ENCODE measurements at regions of chr4 and their contacts with region 1.

Region 1: GRCh38 chr4:48546336-48546735 is 56.3 kb downstream of the ZAR1 start:
- DNase-seq: peak; percentile 73
- H3K4me3 ChIP-seq: no peak overlapping the region
- H3K27ac ChIP-seq: no peak overlapping the region
- H3K4me1 ChIP-seq: peaks cover 32% of the 10 kb centered on the region
- H3K27me3 ChIP-seq: no peaks in the 10 kb centered on the region
- CTCF ChIP-seq: peak; percentile 82

Region 2: DNA sequence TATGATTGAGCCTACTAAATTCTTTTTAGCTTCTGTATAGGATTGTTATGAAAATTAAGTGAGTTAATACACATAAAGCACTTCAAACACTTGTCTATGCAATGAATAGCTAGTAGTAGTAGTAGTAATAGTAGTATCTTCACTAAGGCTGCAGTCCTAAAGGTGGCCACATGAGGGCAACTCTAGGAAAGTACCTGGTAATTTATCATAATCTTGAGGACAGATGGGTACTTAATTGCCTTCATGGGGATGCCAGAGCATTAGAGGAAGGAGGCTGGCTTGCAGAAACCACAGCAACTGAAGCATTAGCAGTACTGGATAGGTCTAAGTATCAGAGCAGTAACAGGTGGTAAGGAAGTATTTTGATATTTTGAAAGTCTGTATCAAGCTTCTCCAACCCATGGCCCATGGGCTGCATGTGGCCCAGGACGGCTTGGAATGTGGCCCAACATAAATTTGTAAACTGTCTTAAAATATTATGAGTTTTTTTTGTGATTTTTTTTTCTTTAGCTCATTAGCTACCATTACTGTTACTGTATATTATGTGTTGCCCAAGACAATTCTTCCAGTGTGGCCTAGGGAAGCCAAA is 512.4 kb before region 1 on chr4:
- CTCF ChIA-PET with region 1: no interaction called
- POLR2A ChIA-PET with region 1: no interaction called
- intact Hi-C with region 1: loop called (anchors 10 kb)
- DNase-seq: peak; percentile 64
- H3K4me3 ChIP-seq: no peak overlapping the region
- H3K27ac ChIP-seq: no peak overlapping the region
- H3K4me1 ChIP-seq: no peaks in the 10 kb centered on the region
- H3K27me3 ChIP-seq: no peaks in the 10 kb centered on the region
- CTCF ChIP-seq: peak; percentile 69

Region 3: GRCh38 chr4:48127682-48128394 is 418.5 kb before region 1 on chr4:
- CTCF ChIA-PET with region 1: interaction called, 13 read pairs
- POLR2A ChIA-PET with region 1: no interaction called
- intact Hi-C with region 1: loop called (anchors 2 kb)
- DNase-seq: peak; percentile 82
- H3K4me3 ChIP-seq: no peak overlapping the region
- H3K27ac ChIP-seq: no peak overlapping the region
- H3K4me1 ChIP-seq: peaks cover 17% of the 10 kb centered on the region
- H3K27me3 ChIP-seq: no peaks in the 10 kb centered on the region
- CTCF ChIP-seq: peak; percentile 79

Region 4: DNA sequence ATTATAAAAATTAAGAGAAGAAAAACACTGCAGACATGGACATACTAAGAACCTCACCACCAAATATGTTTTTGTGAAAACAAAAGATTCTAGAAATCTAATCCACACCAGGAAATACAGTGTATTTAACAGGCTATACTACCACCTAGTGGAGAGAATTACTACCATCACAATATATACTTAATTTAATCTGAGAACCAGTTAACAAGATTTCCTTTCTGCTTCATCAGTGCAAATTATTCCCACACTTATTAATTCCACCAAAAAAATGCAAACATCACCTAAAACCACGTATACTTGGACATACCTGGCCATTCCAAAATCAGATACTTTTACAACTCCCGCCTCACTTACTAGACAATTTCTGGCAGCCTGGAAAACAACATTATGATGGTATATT is 405.3 kb before region 1 on chr4:
- CTCF ChIA-PET with region 1: no interaction called
- POLR2A ChIA-PET with region 1: no interaction called
- intact Hi-C with region 1: loop called (anchors 5 kb)
- DNase-seq: peak; percentile 71
- H3K4me3 ChIP-seq: no peak overlapping the region
- H3K27ac ChIP-seq: no peak overlapping the region
- H3K4me1 ChIP-seq: peaks cover 17% of the 10 kb centered on the region
- H3K27me3 ChIP-seq: no peaks in the 10 kb centered on the region
- CTCF ChIP-seq: peak; percentile 68

Region 5: DNA sequence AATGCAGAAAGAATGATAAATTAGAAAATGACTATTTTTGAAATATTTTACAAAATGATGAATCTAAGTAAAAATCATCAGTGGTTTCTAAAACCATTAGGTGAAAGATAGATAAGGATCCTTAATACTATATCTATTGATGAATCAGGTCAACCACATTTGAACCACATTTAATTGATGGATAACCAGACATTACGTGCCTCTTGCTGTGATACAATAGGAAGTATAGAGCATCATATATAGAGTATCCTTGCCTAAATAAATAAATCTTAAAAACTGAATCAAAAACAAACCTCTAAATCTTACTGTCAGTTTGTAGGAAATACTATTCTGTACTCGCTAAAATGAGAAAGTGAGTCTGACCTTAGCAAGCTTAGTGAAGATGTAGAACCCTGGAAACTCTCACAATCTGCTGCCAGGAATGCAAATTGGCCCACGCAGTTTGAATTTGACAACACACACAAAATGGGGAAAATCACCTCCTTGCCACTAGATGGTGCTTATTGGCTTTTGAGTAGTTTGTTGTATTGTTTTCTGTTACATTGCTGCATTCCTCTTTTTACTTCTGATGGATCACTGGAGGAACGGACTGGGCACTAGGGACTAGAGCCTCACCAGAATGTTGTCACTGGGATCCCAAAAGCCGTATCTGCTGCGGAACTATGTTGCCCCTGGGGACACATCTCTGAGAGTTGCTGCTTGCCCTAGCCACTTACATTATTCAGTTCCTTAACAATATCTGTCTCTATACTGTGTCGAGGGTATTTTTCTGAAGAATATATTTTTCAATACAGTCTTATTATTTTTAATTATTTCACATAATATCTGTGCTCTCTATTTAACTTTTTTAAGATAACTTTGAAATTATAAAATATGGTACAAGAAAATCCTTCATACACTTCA is 230.4 kb before region 1 on chr4:
- CTCF ChIA-PET with region 1: interaction called, 3 read pairs
- POLR2A ChIA-PET with region 1: no interaction called
- intact Hi-C with region 1: loop called (anchors 1 kb)
- DNase-seq: peak; percentile 84
- H3K4me3 ChIP-seq: no peak overlapping the region
- H3K27ac ChIP-seq: no peak overlapping the region
- H3K4me1 ChIP-seq: no peaks in the 10 kb centered on the region
- H3K27me3 ChIP-seq: no peaks in the 10 kb centered on the region
- CTCF ChIP-seq: peak; percentile 78

Region 6: DNA sequence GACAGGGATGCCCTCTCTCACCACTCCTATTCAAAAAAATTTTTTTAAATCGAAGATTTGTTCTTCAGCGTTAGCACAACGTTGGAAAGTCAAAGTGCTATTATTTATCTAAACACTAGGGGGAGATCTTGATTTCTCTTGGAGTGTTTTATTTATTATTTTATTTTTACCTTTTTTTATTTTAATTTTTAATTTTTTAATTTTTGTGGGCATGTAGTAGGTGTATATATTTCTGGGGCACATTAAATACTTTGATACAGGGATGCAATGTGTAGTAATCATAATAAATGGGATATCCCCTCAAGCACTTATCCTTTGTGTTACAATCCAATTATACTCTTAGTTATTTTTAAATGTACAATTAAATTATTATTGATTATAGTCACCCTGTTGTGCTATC is 100.6 kb before region 1 on chr4:
- CTCF ChIA-PET with region 1: no interaction called
- POLR2A ChIA-PET with region 1: no interaction called
- intact Hi-C with region 1: loop called (anchors 5 kb)
- DNase-seq: peak; percentile 29
- H3K4me3 ChIP-seq: no peak overlapping the region
- H3K27ac ChIP-seq: no peak overlapping the region
- H3K4me1 ChIP-seq: peaks cover 1% of the 10 kb centered on the region
- H3K27me3 ChIP-seq: no peaks in the 10 kb centered on the region
- CTCF ChIP-seq: peak; percentile 55

Region 7: GRCh38 chr4:48851651-48852050 is 305.3 kb after region 1 on chr4:
- CTCF ChIA-PET with region 1: no interaction called
- POLR2A ChIA-PET with region 1: no interaction called
- intact Hi-C with region 1: no loop called
- DNase-seq: no peak
- H3K4me3 ChIP-seq: no peak overlapping the region
- H3K27ac ChIP-seq: no peak overlapping the region
- H3K4me1 ChIP-seq: no peaks in the 10 kb centered on the region
- H3K27me3 ChIP-seq: no peaks in the 10 kb centered on the region
- CTCF ChIP-seq: no peak